GM12878 (cell line): ENCODE measurements at regions of chr5 and their contacts with region 1.

Region 1: DNA sequence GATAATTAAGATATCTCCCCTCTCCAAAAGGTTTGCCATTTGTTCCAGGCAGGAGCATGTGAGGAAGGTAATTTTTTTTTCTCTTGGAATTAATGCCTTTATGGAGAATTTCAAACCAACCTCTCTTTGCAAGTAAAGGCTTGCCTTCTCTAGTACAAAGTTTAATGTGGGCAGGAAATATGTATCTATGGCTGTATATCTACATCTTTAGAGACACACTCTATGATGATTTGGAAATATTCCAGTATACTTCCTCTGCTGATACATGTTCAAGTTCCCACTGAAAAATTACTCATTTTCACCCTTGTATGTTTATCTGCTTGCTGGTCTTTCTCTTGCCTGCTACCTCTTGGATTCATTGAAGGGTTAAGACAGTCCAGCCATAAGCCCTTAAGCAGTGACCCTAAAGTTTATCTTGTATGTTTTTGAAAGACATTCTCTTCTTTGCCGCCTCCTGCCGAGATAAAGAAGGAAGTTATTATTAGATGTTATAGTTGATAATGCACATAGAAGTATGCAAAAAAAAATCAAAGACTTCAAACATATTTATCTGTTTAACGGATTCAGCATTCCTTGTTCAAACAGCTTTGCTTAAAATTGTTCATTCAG is 83.6 kb upstream of the SEMA6A start:
- DNase-seq: no peak
- ATAC-seq: peak; percentile 52
- H3K4me3 ChIP-seq: no peak overlapping the region
- H3K27ac ChIP-seq: no peak overlapping the region
- H3K4me1 ChIP-seq: no peaks in the 10 kb centered on the region
- H3K27me3 ChIP-seq: no peaks in the 10 kb centered on the region
- CTCF ChIP-seq: no peak; a peak in 1 of 6 replicates
- EP300 ChIP-seq: no peak
- POLR2A ChIP-seq: no peak
- RAD21 ChIP-seq: no peak

Region 2: DNA sequence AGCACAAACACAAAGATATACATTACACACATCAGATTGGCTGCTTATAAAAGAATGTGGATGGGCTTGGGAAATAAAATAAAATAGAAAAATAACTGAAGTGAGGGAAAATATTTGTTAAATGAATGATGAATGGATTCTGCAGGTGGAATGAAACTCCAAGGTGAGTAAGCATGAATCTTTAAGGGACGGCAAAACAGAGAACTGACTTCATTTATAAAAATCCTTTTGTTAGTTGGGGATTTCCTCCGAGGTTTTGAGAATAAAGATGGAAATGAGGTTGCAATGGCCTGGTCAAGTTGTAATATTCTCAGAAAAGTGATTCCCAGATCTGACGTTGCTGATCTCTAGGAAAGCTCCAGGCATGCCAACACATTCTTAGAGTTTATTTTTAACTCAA is 62.7 kb before region 1 on chr5:
- CTCF ChIA-PET with region 1: no interaction called
- POLR2A ChIA-PET with region 1: interaction called, 3 read pairs
- RAD21 ChIA-PET with region 1: no interaction called
- SMC1A ChIA-PET with region 1: interaction called, 10 read pairs
- in situ Hi-C with region 1: no loop called
- intact Hi-C with region 1: no loop called
- DNase-seq: no peak
- ATAC-seq: peak; percentile 68
- H3K4me3 ChIP-seq: no peak overlapping the region
- H3K27ac ChIP-seq: no peak overlapping the region
- H3K4me1 ChIP-seq: no peaks in the 10 kb centered on the region
- H3K27me3 ChIP-seq: no peaks in the 10 kb centered on the region
- CTCF ChIP-seq: no peak
- EP300 ChIP-seq: no peak
- POLR2A ChIP-seq: no peak
- RAD21 ChIP-seq: no peak

Region 3: GRCh38 chr5:116702776-116703175 is 44.5 kb after region 1 on chr5:
- CTCF ChIA-PET with region 1: interaction called, 5 read pairs
- POLR2A ChIA-PET with region 1: interaction called, 7 read pairs
- RAD21 ChIA-PET with region 1: interaction called, 22 read pairs
- SMC1A ChIA-PET with region 1: interaction called, 25 read pairs
- in situ Hi-C with region 1: no loop called
- intact Hi-C with region 1: loop called (anchors 5 kb)
- DNase-seq: no peak
- ATAC-seq: peak; percentile 72
- H3K4me3 ChIP-seq: no peak overlapping the region
- H3K27ac ChIP-seq: peak overlapping the region; percentile 31
- H3K4me1 ChIP-seq: peaks cover 26% of the 10 kb centered on the region
- H3K27me3 ChIP-seq: no peaks in the 10 kb centered on the region
- CTCF ChIP-seq: no peak
- EP300 ChIP-seq: peak in 1 of 2 experiments; percentile 66; a peak in 1 of 4 replicates
- POLR2A ChIP-seq: no peak
- RAD21 ChIP-seq: no peak